ENCODE measurements at regions of chr1 and their contacts with region 1.

Region 1: GRCh38 chr1:224513787-224514209 is 79.2 kb upstream of the WDR26 start:
- H3K4me3 ChIP-seq: no peak overlapping the region
- H3K27ac ChIP-seq: no peak overlapping the region
- H3K4me1 ChIP-seq: 0 out of 2 replicates have a peak, but pooled peaks cover 3% of the 10 kb centered on the region
- CTCF ChIP-seq: peak; percentile 100

Region 2: GRCh38 chr1:224488806-224489499 is 24.8 kb before region 1 on chr1:
- CTCF ChIA-PET with region 1: interaction called, 17 read pairs
- POLR2A ChIA-PET with region 1: no interaction called
- H3K4me3 ChIP-seq: no peak overlapping the region
- H3K27ac ChIP-seq: no peak overlapping the region
- H3K4me1 ChIP-seq: 0 out of 2 replicates have a peak, but pooled peaks cover 7% of the 10 kb centered on the region
- CTCF ChIP-seq: no peak

Region 3: GRCh38 chr1:224542783-224543440 is 29.1 kb after region 1 on chr1:
- CTCF ChIA-PET with region 1: interaction called, 39 read pairs
- POLR2A ChIA-PET with region 1: interaction called, 4 read pairs
- H3K4me3 ChIP-seq: no peak overlapping the region
- H3K27ac ChIP-seq: peak overlapping the region; percentile 39; the same call in 1 of the 2 replicates
- H3K4me1 ChIP-seq: peaks cover 30% of the 10 kb centered on the region
- CTCF ChIP-seq: no peak

Region 4: GRCh38 chr1:224632381-224632871 is 118.6 kb after region 1 on chr1:
- CTCF ChIA-PET with region 1: interaction called, 100 read pairs
- POLR2A ChIA-PET with region 1: no interaction called
- H3K4me3 ChIP-seq: no peak overlapping the region
- H3K27ac ChIP-seq: no peak overlapping the region
- H3K4me1 ChIP-seq: peaks cover 14% of the 10 kb centered on the region
- CTCF ChIP-seq: no peak

Region 5: DNA sequence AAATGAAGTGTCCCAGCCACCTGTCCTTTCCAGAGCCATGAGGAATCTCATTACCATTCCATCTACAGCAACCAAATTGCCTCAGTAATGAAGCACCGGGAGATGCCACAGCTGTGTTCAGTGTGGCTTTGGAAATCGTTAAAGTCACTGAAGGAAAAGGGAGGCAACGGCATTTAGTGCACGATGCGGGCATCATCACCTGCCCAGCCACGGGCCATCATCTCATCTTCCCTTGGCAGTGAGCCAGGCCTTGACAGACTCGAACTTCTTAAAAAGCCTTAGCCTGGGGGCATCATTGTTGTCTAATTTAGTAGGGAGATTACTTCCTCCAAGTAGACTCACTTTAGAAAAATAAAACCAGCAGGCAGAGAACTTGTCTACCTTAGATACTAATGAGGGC is 170.2 kb after region 1 on chr1:
- CTCF ChIA-PET with region 1: interaction called, 14 read pairs
- POLR2A ChIA-PET with region 1: no interaction called
- H3K4me3 ChIP-seq: no peak overlapping the region
- H3K27ac ChIP-seq: no peak overlapping the region
- H3K4me1 ChIP-seq: peaks cover 10% of the 10 kb centered on the region
- CTCF ChIP-seq: no peak

Region 6: GRCh38 chr1:224863970-224864369 is 350.2 kb after region 1 on chr1:
- CTCF ChIA-PET with region 1: interaction called, 21 read pairs
- POLR2A ChIA-PET with region 1: no interaction called
- H3K4me3 ChIP-seq: no peak overlapping the region
- H3K27ac ChIP-seq: no peak overlapping the region
- H3K4me1 ChIP-seq: no peaks in the 10 kb centered on the region
- CTCF ChIP-seq: no peak

Region 7: DNA sequence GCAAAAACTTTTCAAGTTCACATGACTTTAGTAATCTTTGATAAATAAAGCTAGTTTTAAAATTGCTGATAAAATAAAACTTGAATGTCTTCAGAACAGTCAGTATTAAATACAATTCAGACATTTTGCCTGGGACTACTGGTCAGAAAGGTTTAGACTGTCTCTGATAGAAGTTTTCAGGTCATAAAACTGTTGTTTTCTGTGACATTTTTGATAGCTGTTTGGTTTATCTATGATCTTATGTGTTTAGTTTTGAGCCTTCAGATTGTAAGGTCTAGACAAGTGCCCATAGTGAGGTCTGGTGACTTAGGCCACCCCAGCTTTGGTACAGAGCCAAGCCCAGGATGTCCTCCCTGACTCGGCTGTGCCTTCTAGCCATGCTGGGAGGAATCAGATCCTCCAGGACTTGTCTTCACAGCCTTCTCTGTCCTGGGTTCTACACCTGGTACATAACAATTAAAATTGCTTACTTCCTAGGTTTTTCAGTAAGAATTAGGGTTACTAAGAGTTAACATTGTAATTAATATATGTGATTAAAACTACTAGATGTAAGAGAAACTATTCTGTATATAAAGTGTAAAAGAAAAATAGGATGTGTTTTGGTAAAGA is 400.6 kb after region 1 on chr1:
- CTCF ChIA-PET with region 1: interaction called, 16 read pairs
- POLR2A ChIA-PET with region 1: no interaction called
- H3K4me3 ChIP-seq: no peak overlapping the region
- H3K27ac ChIP-seq: no peak overlapping the region
- H3K4me1 ChIP-seq: no peaks in the 10 kb centered on the region
- CTCF ChIP-seq: no peak